BJ (cell line): ENCODE measurements at regions of chr12 and their contacts with region 1.

Region 1: GRCh38 chr12:54214553-54215406 is 26.0 kb upstream of the SMUG1 start:
- DNase-seq: peak; percentile 29
- H3K4me3 ChIP-seq: 0 out of 2 replicates have a peak overlapping the region, but pooled peaks have one; percentile 7
- H3K27me3 ChIP-seq: peaks cover 3% of the 10 kb centered on the region
- CTCF ChIP-seq: peak; percentile 100

Region 2: GRCh38 chr12:53984901-53985709 is 229.7 kb before region 1 on chr12 and contains the start of gene HOXC10:
- CTCF ChIA-PET with region 1: interaction called, 90 read pairs
- POLR2A ChIA-PET with region 1: no interaction called
- DNase-seq: no peak
- H3K4me3 ChIP-seq: peak within 1 kb of the TSS; percentile 60
- H3K27me3 ChIP-seq: peaks cover 2% of the 10 kb centered on the region; the same call in 1 of the 2 replicates
- CTCF ChIP-seq: peak; percentile 83
- polyA plus RNA-seq, gene HOXC10: 13.9 and 14.9 TPM in 2 replicates

Region 3: DNA sequence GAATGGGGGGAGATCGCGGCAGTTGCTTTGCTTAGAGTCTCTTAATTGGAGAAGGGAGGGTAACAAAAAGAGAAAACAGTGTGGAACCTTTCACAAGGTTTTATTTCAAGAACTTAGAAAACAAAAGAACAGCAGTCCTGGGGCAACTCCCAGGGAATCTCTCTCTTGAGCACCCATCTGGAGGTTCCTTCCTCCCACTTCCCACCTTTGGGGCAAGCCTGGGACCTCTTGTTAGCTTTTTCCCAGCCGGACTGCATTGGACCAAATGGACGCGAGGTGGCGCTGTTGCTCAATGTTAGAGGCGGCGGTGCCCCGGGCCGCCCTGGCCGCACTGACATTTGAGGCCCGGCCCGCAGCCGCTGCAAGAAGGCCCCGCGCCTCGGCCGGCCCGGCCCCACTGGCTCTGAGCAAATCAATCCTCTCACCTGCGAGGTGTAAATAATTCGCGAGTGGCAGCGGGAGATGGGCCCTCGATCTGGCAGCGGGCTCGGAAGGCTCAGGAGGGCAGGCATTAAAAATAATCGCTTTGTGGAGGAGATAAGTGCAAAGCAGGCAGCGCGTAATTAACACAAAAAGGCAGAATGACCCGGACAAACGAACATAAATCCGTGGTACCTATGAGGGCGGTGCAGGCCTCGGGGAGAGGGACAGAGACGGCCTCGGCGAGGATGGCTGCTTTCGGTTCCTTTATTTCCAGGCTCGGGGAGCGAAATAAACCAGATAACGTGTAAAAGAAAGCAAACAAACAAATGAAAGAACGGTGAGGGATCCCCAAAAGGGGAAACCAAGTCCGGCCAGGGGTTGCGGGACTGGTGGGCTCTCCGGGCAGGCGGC is 208.7 kb before region 1 on chr12:
- CTCF ChIA-PET with region 1: interaction called, 213 read pairs
- POLR2A ChIA-PET with region 1: no interaction called
- DNase-seq: no peak
- H3K4me3 ChIP-seq: no peak overlapping the region
- H3K27me3 ChIP-seq: peaks cover 14% of the 10 kb centered on the region
- CTCF ChIP-seq: peak; percentile 80

Region 4: GRCh38 chr12:54201001-54201794 is 13.6 kb before region 1 on chr12:
- CTCF ChIA-PET with region 1: interaction called, 39 read pairs
- POLR2A ChIA-PET with region 1: no interaction called
- DNase-seq: no peak
- H3K4me3 ChIP-seq: no peak overlapping the region
- H3K27me3 ChIP-seq: peaks cover 10% of the 10 kb centered on the region
- CTCF ChIP-seq: peak; percentile 96

Region 5: DNA sequence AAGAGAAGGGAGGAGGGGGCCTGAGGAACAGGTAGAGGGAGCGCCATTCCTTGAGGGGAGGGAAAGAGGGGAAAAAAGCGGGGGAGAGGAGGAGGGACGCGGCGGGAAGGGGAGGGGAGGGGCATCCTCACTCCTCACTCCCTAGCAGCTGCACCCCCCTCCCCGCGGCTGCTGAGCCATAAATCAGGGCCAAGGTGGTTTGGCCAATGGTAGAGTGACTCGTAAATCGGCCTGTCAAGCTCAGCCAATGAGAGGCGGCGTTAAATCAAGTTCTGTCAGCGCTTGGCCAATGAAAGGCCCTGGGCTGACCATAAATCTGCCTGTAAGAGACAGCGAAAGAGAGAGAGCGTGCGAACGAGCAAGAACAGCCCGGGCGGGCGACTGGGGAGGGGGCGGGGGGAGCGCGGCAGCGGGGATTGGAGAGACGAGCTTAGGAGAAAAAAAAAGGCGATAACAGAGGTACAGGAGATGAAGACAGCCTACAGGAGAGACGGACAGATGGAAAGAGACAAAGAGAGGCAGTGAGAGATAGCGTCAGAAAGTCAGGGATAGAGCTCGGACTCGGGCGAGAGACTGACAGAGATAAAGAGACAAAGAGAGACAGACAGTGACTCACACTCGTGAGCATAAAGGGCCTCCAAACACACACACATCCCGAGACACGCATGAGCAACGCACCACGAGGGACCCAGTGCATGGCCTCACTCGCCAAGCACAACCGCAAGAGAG is 144.4 kb after region 1 on chr12:
- CTCF ChIA-PET with region 1: interaction called, 19 read pairs
- POLR2A ChIA-PET with region 1: no interaction called
- DNase-seq: peak; percentile 93
- H3K4me3 ChIP-seq: peak overlapping the region; percentile 55
- H3K27me3 ChIP-seq: no peaks in the 10 kb centered on the region
- CTCF ChIP-seq: no peak

Region 6: GRCh38 chr12:54701940-54702592 is 487.3 kb after region 1 on chr12:
- CTCF ChIA-PET with region 1: no interaction called
- POLR2A ChIA-PET with region 1: no interaction called
- DNase-seq: no peak
- H3K4me3 ChIP-seq: no peak overlapping the region
- H3K27me3 ChIP-seq: no peaks in the 10 kb centered on the region; the same call in 1 of the 2 replicates
- CTCF ChIP-seq: peak; percentile 56